BJ (cell line): ENCODE measurements at regions of chr21 and their contacts with region 1.

Region 1: GRCh38 chr21:15872236-15872635 is 142.5 kb downstream of the USP25 start:
- DNase-seq: no peak
- H3K4me3 ChIP-seq: no peak overlapping the region
- H3K27me3 ChIP-seq: no peaks in the 10 kb centered on the region
- CTCF ChIP-seq: no peak

Region 2: DNA sequence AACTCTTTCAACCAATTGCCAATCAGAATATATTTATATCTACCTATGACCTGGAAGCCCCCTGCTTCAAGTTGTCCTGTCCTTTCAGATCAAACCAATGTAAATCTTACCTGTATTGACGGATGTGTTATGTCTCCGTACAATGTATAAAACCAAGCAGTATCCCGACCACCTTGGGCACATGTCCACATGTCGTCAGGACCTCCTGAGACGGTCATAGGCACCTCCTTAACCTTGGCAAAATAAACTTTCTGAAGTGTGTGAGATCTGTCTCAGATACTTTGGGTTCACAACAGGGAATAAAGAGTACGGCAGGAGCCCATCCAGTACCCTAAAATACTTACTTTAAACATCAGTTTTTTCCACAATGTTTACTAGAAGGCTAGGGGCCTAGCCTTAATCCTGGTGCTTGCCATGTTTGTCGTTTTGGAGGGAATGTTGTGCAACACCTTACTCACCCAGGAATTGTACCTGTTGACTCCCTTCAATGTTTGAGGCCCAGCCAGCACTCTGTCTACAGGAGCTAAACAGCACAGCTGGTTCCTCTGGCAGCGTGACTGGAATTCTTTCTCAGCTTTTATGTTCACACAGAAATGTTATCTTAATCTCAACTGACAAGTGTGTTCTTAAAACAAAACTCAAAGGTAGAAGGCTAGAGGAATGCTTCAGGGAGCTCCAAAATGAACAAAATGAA is 233.2 kb before region 1 on chr21:
- CTCF ChIA-PET with region 1: no interaction called
- POLR2A ChIA-PET with region 1: interaction called, 17 read pairs
- DNase-seq: no peak
- H3K4me3 ChIP-seq: no peak overlapping the region
- H3K27me3 ChIP-seq: no peaks in the 10 kb centered on the region
- CTCF ChIP-seq: no peak